HEK293 (cell line): ENCODE measurements at regions of chr2 and their contacts with region 1.

Region 1: DNA sequence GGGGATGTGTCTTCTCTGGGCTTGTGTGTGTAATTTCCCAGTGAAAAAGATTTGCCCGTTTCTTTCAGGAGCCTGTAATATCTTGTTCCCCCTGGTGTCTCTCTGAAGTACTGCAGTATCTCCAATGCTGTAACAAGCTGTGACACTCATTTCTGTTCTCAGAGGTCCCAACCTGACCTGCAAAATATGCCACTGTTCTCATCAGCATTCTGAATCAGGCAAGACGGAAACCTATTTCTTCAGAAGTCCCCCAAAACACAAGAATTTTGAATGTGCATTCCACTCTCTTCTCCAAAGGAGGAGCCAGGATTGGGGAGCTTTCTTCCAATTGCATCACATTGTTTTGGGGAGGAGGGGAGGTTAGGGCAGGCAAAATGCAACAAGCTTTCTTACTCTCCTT is 77.0 kb upstream of the CNGA3 start:
- H3K4me3 ChIP-seq: no peak overlapping the region
- H3K27ac ChIP-seq: no peak overlapping the region
- H3K4me1 ChIP-seq: no peaks in the 10 kb centered on the region
- CTCF ChIP-seq: no peak

Region 2: GRCh38 chr2:97806738-97807618 is 462.3 kb before region 1 on chr2:
- CTCF ChIA-PET with region 1: interaction called, 34 read pairs
- POLR2A ChIA-PET with region 1: no interaction called
- H3K4me3 ChIP-seq: no peak overlapping the region
- H3K27ac ChIP-seq: no peak overlapping the region
- H3K4me1 ChIP-seq: no peaks in the 10 kb centered on the region
- CTCF ChIP-seq: peak; percentile 72

Region 3: DNA sequence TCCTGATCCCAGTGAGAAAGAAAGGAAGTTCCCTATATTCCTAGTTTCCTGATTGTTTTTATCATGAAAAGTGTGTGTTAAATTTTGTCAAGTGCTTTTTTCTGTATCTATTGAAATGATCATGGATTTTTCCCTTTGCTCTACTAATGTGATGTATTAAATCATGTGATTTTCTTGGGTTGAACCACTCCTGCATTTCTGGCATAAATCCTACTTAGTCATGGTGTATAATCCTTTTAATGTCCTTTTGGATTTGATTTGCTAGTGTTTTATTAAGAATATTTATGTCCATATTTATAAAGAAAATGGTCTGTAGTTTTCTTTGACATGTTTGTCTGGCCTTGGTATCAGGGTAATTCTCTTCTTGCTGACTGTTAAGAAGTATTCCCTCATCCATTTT is 10.4 kb before region 1 on chr2:
- CTCF ChIA-PET with region 1: interaction called, 10 read pairs
- POLR2A ChIA-PET with region 1: no interaction called
- H3K4me3 ChIP-seq: no peak overlapping the region
- H3K27ac ChIP-seq: no peak overlapping the region
- H3K4me1 ChIP-seq: no peaks in the 10 kb centered on the region
- CTCF ChIP-seq: no peak